Astrocyte of the cerebellum (primary cell): ENCODE measurements at regions of chr2 and their contacts with region 1.

Region 1: DNA sequence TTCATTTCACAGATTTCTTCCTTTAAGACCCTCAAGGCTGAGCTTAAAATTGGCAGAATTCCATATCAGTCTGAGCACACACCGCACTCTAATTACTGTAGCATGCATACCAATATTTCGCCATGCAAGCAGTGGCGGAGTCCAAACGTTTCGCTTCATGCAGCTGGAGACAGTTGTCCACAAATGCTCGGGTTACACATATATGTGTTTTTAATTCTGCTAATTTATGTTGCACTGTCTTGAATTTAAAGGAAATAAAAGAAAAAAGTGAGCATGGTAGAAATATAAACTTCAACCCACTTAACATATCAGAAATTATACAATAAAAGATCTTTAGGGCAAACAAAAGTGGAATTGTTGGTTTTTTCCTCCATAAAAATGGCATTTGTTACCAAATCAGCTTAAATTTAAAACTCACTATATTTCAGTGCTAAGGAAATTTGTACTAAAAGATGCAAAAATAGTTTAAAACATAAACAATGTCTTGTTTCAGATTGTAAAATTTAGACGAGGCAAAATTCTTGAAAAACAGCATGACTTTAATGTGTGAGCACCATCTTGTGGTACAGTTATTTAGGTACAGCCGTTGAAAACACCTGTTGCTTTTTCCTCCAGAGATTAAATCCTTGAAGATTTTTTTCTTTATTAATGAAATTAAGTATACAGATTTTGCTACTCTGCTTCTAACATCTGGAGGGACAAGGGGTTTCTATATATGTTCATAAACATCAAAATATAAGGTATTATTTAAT is 24.1 kb upstream of the KANSL1L start:
- DNase-seq: peak; percentile 41
- H3K4me3 ChIP-seq: peak overlapping the region; percentile 6
- CTCF ChIP-seq: peak; percentile 41

Region 2: DNA sequence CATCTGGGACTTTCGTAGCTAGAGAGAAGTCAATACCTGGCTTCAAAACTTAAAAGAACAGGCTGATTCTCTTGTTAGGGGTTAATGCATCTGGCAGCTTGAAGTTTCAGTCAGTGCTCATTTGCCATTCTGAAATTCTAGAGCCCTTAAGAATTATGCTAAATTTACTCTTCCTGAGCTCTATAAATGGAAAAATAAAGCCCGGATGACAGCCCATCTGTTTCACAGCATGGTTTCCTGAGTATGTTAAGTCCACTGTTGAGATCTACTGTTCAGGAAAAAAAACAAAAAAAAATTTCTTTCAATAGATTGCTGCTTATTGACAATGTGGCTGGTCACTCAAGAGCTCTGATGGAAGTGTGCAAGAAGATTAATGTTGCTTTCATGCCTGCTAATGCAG is 294.1 kb before region 1 on chr2:
- in situ Hi-C with region 1: no loop called
- DNase-seq: no peak
- H3K4me3 ChIP-seq: no peak overlapping the region
- CTCF ChIP-seq: no peak

Region 3: DNA sequence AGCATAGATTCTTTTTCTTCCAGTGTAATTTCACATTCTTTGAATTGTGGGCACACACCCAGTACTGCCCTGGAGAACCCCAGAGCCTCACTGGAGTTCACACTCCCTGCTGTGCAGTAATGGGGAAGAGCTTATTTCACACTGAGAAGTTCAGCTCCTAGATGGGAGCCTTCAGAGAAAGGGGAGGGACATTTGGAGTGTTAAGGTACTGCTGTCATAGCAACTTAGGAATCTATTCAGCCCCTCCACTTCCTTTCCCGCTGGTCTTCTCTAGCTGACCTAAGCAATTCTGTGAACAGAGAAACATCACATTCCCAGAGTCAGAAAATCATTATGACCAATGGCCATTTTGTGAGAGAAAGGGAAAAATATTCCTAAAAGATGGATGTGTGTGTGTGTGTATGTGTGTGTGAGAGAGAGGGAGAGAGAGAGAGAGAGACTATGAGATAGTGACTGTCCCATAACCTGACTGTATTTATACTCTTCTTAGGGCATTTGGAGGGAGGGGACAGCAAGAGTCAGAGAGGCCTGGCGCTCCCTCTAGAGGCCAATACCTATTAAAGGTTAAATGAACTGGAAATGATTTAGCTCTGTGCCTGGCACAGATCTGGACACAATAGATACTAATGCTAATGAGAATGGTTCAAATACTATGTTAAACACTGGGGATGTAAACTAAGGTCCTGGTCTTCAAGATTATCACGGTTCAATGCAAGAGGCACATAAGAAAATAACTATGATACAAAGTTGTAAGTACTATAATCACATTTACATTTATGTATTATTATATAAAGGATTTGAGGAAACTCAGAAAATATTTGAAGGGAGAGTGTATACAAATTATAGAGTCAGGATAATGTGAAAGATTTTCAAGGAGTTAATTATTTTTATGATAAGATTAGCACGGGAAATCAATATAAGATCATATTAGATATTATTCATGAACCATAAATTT is 234.3 kb before region 1 on chr2:
- in situ Hi-C with region 1: loop called (anchors 25 kb)
- DNase-seq: peak; percentile 86
- H3K4me3 ChIP-seq: no peak overlapping the region
- CTCF ChIP-seq: peak; percentile 71